AG04449 (cell line): ENCODE measurements at regions of chr9 and their contacts with region 1.

Region 1: GRCh38 chr9:121213136-121213806 is 11.6 kb upstream of the RAB14 start:
- DNase-seq: peak; percentile 45
- H3K4me3 ChIP-seq: no peak overlapping the region
- CTCF ChIP-seq: peak; percentile 93

Region 2: GRCh38 chr9:120630333-120630732 is 582.9 kb before region 1 on chr9:
- CTCF ChIA-PET with region 1: no interaction called
- POLR2A ChIA-PET with region 1: no interaction called
- DNase-seq: no peak
- H3K4me3 ChIP-seq: no peak overlapping the region
- CTCF ChIP-seq: no peak

Region 3: GRCh38 chr9:121133149-121133816 is 80.0 kb before region 1 on chr9:
- CTCF ChIA-PET with region 1: no interaction called
- POLR2A ChIA-PET with region 1: no interaction called
- DNase-seq: no peak
- H3K4me3 ChIP-seq: no peak overlapping the region
- CTCF ChIP-seq: no peak

Region 4: DNA sequence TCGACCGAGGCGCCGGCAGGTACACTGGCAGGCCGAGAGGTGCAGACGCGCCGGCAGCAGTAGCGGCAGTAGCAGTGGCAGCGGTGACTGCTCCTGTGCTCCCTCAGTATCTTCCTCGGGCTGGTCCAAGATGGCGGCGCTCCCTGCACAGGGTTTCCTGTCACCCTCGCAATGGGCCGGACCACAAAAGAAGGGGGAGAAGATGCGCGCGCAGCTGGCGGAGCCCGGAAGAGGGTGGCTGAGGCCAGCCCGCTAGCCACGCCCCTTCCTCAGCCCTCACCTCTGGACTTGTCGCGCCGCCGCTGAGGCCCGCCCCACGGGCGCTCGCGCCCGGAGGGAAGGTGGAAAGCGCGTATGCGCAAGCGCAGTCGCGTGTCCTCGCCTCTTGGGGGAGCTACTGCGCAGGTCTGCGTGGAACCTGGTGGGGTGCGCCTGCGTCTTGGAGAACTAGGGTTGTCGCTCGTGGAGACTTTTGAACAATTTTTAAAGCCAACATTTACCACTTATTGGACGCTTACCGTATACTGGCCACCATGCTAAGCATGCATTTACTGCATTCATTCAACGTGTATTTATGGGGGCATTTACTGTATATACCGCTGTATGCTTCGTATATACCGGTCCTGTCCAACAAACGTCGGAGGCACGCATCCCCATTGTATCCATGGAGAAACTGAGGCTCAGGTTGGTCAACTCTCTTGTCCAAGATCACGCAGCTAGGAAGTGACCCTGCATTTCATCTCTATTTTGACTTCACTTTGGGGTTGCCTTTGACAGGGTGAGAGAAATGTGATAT is 11.3 kb before region 1 on chr9 and contains the start of gene RAB14:
- CTCF ChIA-PET with region 1: interaction called, 66 read pairs
- POLR2A ChIA-PET with region 1: interaction called, 4 read pairs
- DNase-seq: peak; percentile 67
- H3K4me3 ChIP-seq: peak within 1 kb of the TSS; percentile 82
- CTCF ChIP-seq: peak; percentile 70

Region 5: DNA sequence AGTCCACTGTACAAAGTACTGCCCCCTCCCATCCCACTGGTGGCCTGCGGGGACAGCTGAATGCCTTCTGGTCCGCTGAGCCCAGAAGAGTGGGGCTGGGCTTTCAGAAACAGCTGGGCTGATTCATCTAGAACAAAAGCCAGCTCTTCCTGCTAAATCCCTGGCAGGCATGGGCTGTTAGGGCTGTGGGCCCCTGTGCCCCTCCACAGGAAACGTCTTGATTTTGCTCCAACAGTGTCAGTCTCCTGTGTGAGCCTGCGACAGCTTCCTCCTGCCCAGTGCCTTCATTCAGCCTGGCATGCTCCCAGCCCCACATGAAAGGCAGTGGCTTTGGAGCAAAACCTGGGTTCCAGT is 47.8 kb after region 1 on chr9:
- CTCF ChIA-PET with region 1: interaction called, 22 read pairs
- POLR2A ChIA-PET with region 1: no interaction called
- DNase-seq: no peak
- H3K4me3 ChIP-seq: no peak overlapping the region
- CTCF ChIP-seq: no peak

Region 6: GRCh38 chr9:121286973-121287741 is 73.9 kb after region 1 on chr9:
- CTCF ChIA-PET with region 1: interaction called, 109 read pairs
- POLR2A ChIA-PET with region 1: interaction called, 3 read pairs
- DNase-seq: peak; percentile 58
- H3K4me3 ChIP-seq: peak overlapping the region; percentile 13
- CTCF ChIP-seq: peak; percentile 11

Region 7: GRCh38 chr9:121322037-121322775 is 108.9 kb after region 1 on chr9:
- CTCF ChIA-PET with region 1: interaction called, 187 read pairs
- POLR2A ChIA-PET with region 1: no interaction called
- DNase-seq: peak; percentile 87
- H3K4me3 ChIP-seq: no peak overlapping the region
- CTCF ChIP-seq: no peak

Region 8: DNA sequence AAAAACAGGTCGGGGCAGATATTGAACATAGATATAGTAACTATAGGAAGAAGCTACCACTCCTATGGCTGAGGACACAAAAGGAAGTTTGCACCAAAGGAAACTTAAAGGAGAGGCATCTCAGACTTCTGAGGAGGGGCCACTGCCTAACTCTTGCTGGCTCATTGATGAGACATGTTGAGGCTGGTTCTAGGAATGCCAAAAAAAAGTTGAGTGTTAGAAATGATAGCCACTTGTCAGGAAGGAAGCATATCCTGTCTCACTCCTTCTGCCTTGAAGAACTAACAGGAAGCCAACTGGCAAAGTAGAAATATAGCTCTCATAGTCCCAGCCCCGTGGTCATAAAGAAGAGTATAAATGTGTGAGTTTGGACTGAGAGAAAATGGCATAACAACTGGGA is 180.0 kb after region 1 on chr9:
- CTCF ChIA-PET with region 1: interaction called, 195 read pairs
- POLR2A ChIA-PET with region 1: no interaction called
- DNase-seq: no peak
- H3K4me3 ChIP-seq: no peak overlapping the region
- CTCF ChIP-seq: no peak

Region 9: DNA sequence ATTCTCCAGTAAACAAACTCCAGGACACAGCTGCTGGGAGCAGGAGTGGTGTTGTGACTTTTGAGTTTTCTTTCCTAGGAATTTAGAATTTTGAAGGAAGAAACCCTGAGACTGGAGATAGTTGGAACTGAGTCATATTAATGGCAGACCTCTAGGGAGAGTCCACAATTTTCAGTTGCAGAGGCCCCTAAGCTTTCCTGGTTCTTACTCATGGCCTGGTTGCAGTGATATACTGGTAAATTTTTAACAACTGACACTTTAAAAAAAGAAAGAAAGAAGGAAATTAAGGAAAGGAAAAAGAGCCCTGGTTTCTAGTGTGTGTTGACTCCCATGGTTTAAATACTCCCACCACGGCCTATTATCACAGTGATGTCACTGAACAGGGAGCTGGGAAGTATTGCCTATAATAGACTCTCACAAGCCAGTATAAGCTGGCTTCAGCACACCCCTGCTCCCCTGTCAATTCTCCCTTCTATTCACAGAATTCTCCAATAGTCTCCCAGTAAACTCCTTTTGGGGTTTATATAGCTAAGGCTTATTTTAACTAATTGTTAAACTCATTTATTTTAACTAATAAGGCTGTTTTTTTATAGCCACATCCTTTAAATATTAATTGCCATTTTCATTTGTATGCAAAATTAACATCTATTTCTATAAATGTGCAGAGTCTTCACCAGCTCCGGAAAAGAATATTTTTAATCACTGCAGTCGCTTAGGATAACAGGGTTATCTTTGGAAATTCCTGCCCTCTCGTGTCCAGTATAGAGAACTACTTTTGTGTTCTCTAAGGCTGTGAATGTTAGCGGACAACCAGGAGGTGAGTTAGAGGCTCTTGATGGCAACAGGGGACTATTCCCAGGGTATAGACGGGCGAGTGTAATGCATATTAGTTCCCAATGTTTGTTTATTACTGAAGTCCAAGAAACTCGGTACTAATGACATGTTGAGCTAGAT is 226.7 kb after region 1 on chr9:
- CTCF ChIA-PET with region 1: interaction called, 21 read pairs
- POLR2A ChIA-PET with region 1: no interaction called
- DNase-seq: no peak
- H3K4me3 ChIP-seq: no peak overlapping the region
- CTCF ChIP-seq: no peak

Region 10: GRCh38 chr9:121852651-121853616 is 639.7 kb after region 1 on chr9:
- CTCF ChIA-PET with region 1: no interaction called
- POLR2A ChIA-PET with region 1: no interaction called
- DNase-seq: no peak
- H3K4me3 ChIP-seq: no peak overlapping the region
- CTCF ChIP-seq: no peak